Activated T-helper 2 cell treated with anti-CD3 and anti-CD28 coated beads, Interferon-gamma antibody, Interleukin-2, Interleukin-4, amounts not matched to agents 10 μg/mL and 5 μg/mL and 100 μg/mL, durations not matched to agents 14 hours and 24 hours and 36 hours (primary cell): ENCODE measurements at regions of chr12 and their contacts with region 1.

Region 1: DNA sequence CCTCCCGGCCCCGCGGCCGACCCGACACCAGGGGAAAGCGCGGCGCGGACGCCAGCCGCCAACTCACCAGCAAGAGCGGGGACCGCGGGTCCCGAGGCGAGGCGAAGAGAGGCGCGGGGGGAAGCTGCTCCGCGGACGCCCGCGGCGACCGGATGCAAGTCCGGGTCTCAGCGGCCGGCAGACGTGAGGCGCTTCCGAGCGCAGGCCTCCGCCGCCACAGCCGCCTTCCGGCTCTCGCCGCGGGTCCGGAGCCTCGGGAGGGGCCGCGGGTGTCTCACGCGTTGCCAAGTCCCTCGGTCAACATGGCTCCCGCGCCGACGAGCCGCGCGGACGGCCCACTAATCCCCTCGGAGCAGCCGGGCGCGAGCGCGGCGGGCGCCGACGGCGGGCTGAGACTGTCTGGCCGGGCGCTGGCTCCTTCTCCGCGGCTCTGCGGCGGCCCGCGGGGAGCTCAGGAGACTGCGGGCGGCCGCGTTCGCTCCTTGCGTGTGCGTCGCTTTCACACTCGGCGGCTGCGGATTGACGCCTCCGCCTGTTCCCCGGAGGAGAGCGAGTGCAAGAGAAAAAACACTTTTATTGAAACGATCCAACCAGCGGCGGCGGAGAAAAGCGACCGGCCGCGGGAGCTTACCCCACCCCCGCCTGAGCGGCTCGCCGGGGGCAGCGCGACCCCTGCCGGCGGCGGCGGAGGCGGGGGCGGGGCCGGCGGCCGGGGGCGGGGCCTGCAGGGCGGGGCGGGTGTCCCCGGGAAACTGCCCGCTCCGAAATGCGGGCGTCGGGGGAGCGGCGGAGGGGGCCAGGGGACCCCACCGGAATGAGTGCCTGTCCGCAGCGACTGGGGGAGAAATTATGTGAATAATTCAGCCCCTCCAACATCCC is at the start of gene CDK17:
- DNase-seq: peak; percentile 81
- H3K4me3 Mint-ChIP-seq: peak within 1 kb of the TSS; percentile 98
- H3K27ac Mint-ChIP-seq: peak within 1 kb of the TSS; percentile 97
- H3K4me1 Mint-ChIP-seq: peaks cover 48% of the 10 kb centered on the region
- H3K27me3 Mint-ChIP-seq: no peaks in the 10 kb centered on the region
- total RNA-seq, gene CDK17: 34.7 and 37.6 TPM in 2 replicates

Region 2: DNA sequence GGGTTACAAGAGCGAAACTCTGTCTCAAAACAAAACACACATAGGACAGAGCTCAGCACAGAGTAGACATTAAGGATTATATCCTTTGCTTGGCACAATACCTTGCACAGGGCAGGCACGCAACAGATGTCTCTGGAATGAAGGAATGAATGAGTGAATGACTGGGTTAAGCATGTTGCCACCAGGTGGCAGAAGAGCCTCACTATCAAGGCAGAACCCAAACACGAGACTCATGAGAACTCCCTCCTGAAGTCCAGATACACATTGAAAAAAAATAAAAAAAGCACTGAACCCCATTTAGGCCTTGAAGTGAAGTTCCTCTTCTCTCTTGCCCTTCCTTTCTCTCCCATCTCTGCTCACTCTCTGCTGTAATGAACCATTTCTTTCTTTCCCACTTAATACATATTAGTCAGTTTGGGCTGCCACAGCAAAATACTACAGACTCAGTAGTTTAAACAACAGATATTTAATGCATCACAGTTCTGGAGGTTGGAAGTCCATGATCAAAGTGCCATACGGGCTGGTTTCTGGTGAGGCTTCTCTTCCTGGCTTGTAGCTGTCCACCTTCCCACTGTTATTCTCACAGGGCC is 338.2 kb before region 1 on chr12:
- intact Hi-C with region 1: loop called (anchors 1 kb)
- DNase-seq: peak; percentile 60
- H3K4me3 Mint-ChIP-seq: no peak overlapping the region
- H3K27ac Mint-ChIP-seq: no peak overlapping the region
- H3K4me1 Mint-ChIP-seq: peaks cover 22% of the 10 kb centered on the region
- H3K27me3 Mint-ChIP-seq: no peaks in the 10 kb centered on the region

Region 3: GRCh38 chr12:96164951-96165811 is 235.0 kb before region 1 on chr12:
- intact Hi-C with region 1: no loop called
- DNase-seq: no peak
- H3K4me3 Mint-ChIP-seq: no peak overlapping the region
- H3K27ac Mint-ChIP-seq: no peak overlapping the region
- H3K4me1 Mint-ChIP-seq: peaks cover 5% of the 10 kb centered on the region
- H3K27me3 Mint-ChIP-seq: no peaks in the 10 kb centered on the region

Region 4: DNA sequence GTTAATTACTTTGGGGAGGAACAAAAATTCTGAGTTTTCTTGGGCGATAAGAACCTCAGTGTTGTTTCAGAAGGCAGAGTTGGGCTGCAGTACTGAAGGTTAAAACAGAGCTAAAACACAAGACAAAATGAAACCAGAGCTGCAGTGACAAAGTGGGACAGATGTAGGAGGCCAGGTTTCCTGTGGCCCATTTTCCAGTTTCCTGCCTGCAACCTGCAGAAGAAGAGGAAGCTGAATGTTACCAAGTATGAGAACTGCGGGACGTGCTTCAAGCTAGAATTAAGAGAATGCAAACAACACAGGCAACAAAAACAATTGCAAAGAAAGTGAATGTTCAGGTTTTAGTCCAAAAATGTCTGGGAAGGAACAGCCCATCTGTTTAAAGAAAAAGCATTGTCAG is 188.2 kb before region 1 on chr12:
- intact Hi-C with region 1: loop called (anchors 1 kb)
- DNase-seq: no peak
- H3K4me3 Mint-ChIP-seq: peak overlapping the region; percentile 10
- H3K27ac Mint-ChIP-seq: peak overlapping the region; percentile 48
- H3K4me1 Mint-ChIP-seq: peaks cover 72% of the 10 kb centered on the region
- H3K27me3 Mint-ChIP-seq: no peaks in the 10 kb centered on the region

Region 5: DNA sequence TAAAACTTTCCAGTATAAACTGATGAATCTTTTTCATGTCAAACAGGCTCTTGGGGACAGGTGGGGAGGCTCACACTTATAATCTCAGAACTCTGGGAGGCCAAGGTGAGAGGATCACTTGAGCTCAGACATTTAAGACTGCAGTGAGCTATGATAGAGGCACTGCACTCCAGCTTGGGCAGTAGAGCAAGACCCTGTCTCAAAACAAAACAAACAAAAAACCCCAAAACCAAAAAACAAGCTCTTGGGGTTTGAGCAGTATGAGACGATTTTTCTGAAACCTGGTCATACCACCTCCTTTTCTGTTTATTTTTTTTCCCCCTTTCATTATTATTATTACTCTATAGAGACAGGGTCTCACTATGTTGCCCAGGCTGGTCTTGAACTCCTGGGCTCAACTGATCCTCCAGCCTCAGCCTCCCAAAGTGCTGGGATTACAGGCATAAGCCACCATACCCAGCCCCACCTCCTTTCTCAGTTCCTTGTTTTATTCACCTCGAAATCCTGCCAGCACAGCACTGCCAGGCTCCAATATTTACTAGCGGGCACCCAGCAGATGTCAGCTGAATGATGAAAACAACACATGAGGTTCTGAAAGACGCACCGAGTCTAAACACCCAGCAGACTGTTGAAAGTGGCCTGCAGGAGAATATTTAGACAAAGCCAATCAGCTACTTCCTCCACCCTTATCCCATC is 19.6 kb after region 1 on chr12:
- intact Hi-C with region 1: loop called (anchors 1 kb)
- DNase-seq: no peak
- H3K4me3 Mint-ChIP-seq: no peak overlapping the region
- H3K27ac Mint-ChIP-seq: no peak overlapping the region
- H3K4me1 Mint-ChIP-seq: peaks cover 42% of the 10 kb centered on the region
- H3K27me3 Mint-ChIP-seq: no peaks in the 10 kb centered on the region

Region 6: GRCh38 chr12:96434107-96434506 is 33.9 kb after region 1 on chr12:
- intact Hi-C with region 1: loop called (anchors 1 kb)
- DNase-seq: peak; percentile 71
- H3K4me3 Mint-ChIP-seq: peak overlapping the region; percentile 10
- H3K27ac Mint-ChIP-seq: peak overlapping the region; percentile 64
- H3K4me1 Mint-ChIP-seq: peaks cover 40% of the 10 kb centered on the region
- H3K27me3 Mint-ChIP-seq: no peaks in the 10 kb centered on the region

Region 7: DNA sequence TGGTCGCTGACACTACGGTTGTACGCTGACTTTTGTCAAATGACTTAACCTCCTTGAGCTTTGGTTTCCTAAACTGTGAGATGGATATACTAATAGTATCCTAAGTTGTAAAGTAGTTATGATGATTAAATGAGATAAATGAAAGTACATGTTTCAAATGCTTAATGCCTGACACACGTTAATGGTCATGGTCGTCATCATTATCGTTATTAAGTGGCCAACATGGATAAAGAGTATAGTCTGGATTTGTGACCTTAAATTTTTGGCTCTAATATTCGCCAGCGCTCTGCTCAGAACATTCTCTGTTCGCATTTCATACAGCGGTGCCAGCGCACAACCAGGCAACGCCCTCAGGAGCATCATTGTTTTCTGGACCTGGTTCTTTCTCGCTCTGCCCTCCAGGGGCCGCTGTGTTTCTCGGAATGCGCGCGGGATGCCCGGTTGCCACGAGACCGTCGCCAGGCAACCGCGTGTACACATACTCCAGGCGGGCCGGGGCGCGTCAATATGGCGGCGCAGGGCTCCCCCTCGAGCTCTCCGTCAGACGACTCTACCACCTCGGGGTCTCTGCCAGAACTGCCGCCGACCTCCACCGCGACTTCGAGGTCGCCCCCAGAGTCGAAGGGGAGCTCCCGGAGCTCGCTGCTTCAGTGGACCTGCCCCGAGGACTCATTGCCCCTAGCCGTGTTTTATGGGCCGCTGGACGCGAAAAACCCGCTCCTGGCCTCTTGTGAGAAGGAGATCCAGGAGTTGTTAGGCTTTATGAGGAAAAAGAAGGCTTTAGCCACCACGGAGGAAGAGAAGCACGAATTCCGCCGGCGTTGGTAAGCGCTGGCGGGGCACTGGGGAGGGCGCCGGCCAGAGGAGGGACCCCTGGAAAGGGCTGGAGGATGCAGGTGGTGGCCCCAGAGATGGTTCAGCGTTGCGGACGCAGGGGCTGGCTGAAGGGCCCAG is 89.2 kb after region 1 on chr12 and contains the start of gene CFAP54:
- intact Hi-C with region 1: loop called (anchors 1 kb)
- DNase-seq: peak; percentile 92
- H3K4me3 Mint-ChIP-seq: peak within 1 kb of the TSS; percentile 84
- H3K27ac Mint-ChIP-seq: peak within 1 kb of the TSS; percentile 48
- H3K4me1 Mint-ChIP-seq: peaks cover 31% of the 10 kb centered on the region
- H3K27me3 Mint-ChIP-seq: peaks cover 25% of the 10 kb centered on the region
- total RNA-seq, gene CFAP54: 0.14 and 0.23 TPM in 2 replicates

Region 8: GRCh38 chr12:96516472-96517430 is 116.6 kb after region 1 on chr12:
- intact Hi-C with region 1: loop called (anchors 1 kb)
- DNase-seq: peak; percentile 77
- H3K4me3 Mint-ChIP-seq: no peak overlapping the region
- H3K27ac Mint-ChIP-seq: peak overlapping the region; percentile 68
- H3K4me1 Mint-ChIP-seq: peaks cover 15% of the 10 kb centered on the region
- H3K27me3 Mint-ChIP-seq: peaks cover 1% of the 10 kb centered on the region